ENCODE measurements at regions of chr5 and their contacts with region 1.

Region 1: DNA sequence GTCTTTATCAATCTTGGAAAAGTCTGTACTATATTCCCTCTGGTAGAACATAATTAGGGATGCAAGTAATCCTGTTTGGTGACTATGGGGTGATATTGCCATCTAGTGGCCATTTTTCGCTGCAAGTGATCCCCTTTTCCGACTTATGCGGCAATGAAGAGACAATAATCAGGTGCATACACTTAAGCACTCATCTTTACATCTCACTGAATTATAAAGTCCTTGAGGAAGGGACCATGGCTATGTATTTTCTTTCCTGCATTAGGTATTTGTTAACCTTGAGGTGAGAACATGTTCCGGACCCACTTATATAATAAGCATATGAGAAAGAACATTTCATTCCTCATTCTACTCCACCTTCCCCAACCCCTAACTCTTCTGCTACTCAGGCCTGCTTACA is 19.6 kb upstream of the LIX1 start:
- DNase-seq: peak; percentile 28
- CTCF ChIP-seq: peak; percentile 75

Region 2: DNA sequence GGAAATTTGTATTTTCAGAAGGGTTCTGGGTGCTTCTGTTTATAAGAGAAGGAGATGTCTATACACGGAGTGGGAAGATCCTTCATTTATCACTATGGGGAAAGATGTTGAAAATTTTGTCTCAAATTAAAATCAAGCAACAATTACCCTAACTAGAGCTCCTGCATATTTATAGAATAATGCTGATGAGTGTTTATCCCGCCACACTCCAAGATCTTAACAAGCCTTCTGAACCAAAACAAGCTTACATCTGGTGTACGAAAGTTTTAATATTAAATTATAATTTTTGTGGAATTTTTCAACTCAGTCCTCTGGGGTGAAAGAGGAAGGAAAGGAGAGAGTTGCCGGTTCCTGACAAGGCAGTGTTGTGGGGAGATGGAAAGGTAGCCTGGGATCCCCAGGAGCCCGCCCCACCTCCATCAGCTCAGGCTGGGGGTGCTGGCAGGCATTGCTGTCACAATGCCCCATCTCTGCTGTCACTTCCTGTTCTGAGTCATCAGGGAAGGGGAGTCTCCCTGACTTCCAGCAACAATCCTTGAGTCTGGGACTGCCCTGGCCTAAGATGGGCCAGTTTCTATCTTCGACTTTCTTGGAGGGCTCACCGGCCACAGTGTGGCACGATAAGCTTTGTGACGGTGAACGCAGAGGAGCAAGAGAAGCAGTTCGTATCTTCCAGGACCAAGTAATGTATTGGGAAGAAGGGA is 418.8 kb before region 1 on chr5:
- in situ Hi-C with region 1: loop called (anchors 10 kb)
- DNase-seq: no peak
- CTCF ChIP-seq: no peak

Region 3: GRCh38 chr5:96776621-96777020 is 385.4 kb before region 1 on chr5:
- in situ Hi-C with region 1: no loop called
- DNase-seq: no peak
- CTCF ChIP-seq: no peak

Region 4: GRCh38 chr5:96868603-96869371 is 293.3 kb before region 1 on chr5:
- in situ Hi-C with region 1: loop called (anchors 25 kb)
- DNase-seq: peak; percentile 52
- CTCF ChIP-seq: peak; percentile 94